ENCODE measurements at regions of chr6 and their contacts with region 1.

Region 1: DNA sequence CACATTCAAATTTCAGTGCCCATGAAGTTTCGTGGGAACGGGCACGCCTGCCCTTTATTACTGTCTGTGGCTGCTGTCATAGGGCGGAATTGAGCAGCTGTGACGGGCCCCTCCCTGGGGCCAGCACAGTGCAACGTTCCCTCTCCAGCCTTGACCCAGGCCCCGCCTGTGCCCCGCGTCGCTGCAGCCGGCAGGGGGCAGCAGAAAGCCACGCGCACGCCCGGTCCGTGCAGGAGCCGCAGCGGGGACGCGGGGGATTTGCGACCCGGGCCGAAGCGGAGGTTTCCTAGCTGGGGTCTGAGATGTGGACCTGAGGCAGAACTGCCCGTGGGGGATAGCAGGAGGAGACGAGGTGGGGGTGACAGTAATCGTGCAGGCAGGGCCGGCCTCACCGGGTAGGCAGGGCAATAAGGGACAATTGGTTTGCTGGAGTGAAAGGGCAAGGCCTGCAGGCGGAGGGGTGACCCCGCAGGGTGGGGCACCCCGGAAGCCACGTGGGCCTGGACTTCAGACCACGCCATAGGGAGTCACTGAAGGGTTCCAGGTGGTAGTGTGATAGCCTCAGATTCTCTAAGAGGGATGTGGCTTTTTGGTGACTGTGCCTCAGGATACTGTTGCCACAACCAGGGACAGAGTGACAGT is 54.4 kb downstream of the SYTL3 start:
- DNase-seq: peak; percentile 65
- H3K4me3 Mint-ChIP-seq: peak overlapping the region; percentile 75
- H3K27ac Mint-ChIP-seq: peak overlapping the region; percentile 12
- H3K4me1 Mint-ChIP-seq: peaks cover 32% of the 10 kb centered on the region
- H3K27me3 Mint-ChIP-seq: no peaks in the 10 kb centered on the region
- CTCF ChIP-seq: peak; percentile 99

Region 2: DNA sequence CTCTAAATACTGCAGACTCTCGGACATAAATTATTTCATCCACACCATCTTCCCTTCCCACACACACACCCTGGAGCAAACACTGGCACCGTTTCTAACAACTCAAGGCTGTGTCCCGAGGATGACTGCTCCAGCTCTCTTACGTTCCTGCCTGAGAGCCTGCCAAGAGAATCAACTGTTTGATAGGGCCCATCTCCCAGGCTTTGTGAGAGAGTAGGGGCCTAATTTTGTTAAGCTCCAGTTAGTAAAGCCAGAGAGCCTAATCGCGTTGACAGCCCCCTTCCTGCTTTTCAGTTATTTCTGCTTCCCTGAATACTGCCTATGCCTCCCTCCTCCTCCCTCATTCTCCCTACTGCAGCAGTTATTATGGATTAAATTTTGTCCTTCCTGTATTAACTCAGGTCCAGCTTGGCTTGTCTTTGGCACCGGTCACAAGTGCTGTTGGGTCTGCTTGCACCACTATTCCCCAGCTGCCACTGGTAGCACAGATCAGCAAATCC is 262.5 kb before region 1 on chr6:
- CTCF ChIA-PET with region 1: no interaction called
- POLR2A ChIA-PET with region 1: no interaction called
- intact Hi-C with region 1: no loop called
- DNase-seq: no peak
- H3K4me3 Mint-ChIP-seq: no peak overlapping the region
- H3K27ac Mint-ChIP-seq: peak overlapping the region; percentile 70
- H3K4me1 Mint-ChIP-seq: no peaks in the 10 kb centered on the region
- H3K27me3 Mint-ChIP-seq: no peaks in the 10 kb centered on the region
- CTCF ChIP-seq: no peak

Region 3: DNA sequence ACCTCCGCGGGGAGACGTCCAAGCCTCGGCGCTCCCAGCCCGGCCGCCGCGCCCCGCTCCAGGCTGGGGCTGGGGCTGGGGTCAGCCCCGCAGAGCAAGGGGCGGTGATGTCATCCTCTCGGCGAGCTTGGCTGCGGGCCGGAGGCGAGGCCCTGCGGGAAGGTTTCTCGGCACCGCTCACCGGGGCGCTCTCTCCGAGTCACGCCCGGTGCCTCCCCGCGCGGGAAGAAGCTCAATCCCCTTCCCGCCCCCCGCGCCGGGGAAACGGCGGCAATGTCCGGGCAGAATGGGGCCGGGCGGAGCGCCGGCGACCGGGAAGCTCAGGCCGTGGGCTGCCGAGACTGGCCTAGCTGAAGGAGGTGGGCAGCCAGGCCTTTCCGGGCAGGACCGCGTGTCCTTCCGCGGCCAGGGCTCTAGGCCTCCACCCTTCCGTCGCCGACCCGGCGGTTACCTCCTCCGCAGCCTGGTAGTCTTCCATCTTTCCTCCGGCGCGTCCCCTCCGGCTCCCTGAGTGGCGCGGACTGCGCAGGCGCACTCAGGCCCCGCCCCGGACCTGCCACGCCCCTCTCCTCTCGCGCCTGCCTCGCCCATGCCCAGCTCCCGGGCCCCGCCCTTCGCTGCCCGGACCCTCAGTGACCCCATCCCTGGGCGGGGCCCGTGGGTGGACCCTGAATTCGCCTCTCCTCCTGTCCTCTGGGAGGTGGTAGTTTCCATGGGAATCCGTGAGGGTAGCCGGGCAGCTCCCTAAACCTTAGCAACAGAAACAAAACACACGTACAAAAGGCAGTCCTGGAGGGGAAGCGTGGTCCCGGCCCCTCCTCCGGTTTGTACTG is 59.9 kb before region 1 on chr6 and contains the start of gene DYNLT1:
- CTCF ChIA-PET with region 1: interaction called, 4 read pairs
- POLR2A ChIA-PET with region 1: interaction called, 10 read pairs
- intact Hi-C with region 1: no loop called
- DNase-seq: peak; percentile 90
- H3K4me3 Mint-ChIP-seq: peak within 1 kb of the TSS; percentile 93
- H3K27ac Mint-ChIP-seq: peak within 1 kb of the TSS; percentile 94
- H3K4me1 Mint-ChIP-seq: peaks cover 55% of the 10 kb centered on the region
- H3K27me3 Mint-ChIP-seq: no peaks in the 10 kb centered on the region
- CTCF ChIP-seq: no peak
- total RNA-seq, gene DYNLT1: 122 and 156 TPM in 2 replicates

Region 4: DNA sequence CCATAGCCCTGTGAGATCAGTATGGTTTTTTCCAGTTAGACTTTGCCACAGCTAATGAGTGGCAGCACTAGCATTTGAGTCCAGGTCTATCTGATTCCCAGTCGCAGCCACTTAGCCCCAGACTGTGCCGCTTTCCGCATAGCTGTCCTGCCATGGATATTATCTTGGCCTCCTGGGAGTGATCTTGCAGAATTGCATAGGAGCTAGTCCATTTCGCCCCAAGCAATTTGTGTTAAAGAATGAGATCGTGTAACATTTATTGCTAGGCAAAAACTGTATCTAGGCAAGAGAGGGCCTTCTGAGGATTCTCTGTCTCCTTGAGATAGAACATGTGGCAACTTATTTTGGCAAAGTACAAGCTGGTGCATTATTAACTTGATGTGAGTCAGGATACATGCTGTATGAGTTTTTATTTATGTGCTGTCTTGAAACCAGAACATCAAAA is 40.7 kb after region 1 on chr6:
- CTCF ChIA-PET with region 1: interaction called, 14 read pairs
- POLR2A ChIA-PET with region 1: interaction called, 13 read pairs
- intact Hi-C with region 1: no loop called
- DNase-seq: no peak
- H3K4me3 Mint-ChIP-seq: no peak overlapping the region
- H3K27ac Mint-ChIP-seq: no peak overlapping the region
- H3K4me1 Mint-ChIP-seq: peaks cover 7% of the 10 kb centered on the region
- H3K27me3 Mint-ChIP-seq: no peaks in the 10 kb centered on the region
- CTCF ChIP-seq: no peak

Region 5: DNA sequence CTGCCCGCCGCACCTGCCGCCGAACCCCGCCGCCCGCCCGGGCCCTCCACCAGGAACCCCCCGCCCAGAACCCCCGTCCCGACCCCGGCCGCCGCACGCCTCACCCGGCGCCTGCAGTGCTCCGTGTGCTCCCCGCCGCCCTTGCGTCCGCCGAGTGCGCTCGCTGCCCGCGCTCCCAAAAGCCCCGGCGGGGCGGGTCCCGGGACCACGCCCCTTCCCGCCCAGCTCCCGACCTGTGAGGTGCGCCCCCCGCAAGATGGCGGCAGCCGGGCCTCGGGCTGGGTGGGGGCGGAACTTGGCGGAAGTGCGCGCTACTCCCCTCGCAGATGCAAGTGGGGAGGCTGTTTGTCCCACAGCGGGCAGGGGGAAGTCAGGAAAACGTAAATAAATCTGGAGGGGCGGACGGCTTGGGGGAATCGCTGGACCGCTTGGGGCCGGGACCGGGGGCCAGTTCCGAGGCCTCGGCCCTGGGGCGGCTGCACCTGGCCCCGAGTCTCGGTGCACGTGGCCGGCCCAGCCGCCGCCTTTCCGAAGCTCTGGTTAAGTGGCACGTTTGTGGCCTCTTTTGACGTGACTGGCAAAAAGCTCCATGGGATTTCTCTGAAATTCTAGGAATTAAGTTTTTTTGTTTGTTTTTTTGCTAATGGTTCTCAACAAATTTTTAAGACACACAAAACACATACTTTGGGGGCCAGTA is 115.1 kb after region 1 on chr6 and contains the start of gene EZR:
- CTCF ChIA-PET with region 1: interaction called, 5 read pairs
- POLR2A ChIA-PET with region 1: interaction called, 11 read pairs
- intact Hi-C with region 1: loop called (anchors 1 kb)
- DNase-seq: peak; percentile 76
- H3K4me3 Mint-ChIP-seq: peak within 1 kb of the TSS; percentile 97
- H3K27ac Mint-ChIP-seq: peak within 1 kb of the TSS; percentile 97
- H3K4me1 Mint-ChIP-seq: peaks cover 17% of the 10 kb centered on the region
- H3K27me3 Mint-ChIP-seq: no peaks in the 10 kb centered on the region
- CTCF ChIP-seq: no peak
- total RNA-seq, gene EZR: 243 and 296 TPM in 2 replicates

Region 6: DNA sequence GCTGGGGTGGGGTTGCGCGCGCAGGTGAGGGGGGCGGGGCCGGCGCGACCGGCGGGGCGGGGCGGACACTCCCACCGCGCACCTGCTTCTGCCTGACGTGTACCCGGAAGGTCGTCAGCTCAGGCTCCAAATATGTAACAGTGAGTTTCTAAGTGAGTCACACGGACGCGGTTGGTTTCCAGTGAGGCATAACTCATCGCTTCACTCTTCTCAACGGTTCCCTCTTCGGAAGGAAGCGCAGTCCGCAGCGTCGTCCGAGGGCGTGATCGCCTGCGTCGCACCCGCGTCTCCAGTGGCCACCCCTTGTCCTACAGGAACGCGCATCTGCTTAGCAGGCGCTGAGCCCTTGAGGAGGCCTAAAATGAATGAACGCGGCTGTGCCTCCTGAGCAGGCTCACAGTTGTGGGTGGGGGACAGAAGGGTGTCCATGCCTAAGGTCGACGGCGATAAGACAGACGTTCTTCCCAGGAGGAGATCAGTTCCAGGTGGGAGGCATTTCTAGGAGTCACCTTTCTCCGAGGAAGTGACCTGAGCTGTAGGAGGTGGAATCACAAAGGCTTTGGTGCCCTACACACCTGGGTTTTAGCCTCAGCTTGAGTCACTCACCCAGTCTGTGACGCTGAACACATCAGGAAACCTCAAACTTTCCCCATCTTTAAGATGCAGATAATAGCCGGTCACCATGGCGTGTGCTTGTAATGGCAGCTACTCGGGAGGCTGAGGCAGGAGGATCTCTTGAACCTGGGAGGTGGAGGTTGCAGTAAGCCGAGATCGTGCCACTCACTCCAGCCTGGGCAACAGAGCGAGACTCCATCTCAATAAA is 165.7 kb after region 1 on chr6:
- CTCF ChIA-PET with region 1: no interaction called
- POLR2A ChIA-PET with region 1: interaction called, 17 read pairs
- intact Hi-C with region 1: no loop called
- DNase-seq: peak; percentile 98
- H3K4me3 Mint-ChIP-seq: peak overlapping the region; percentile 83
- H3K27ac Mint-ChIP-seq: peak overlapping the region; percentile 100
- H3K4me1 Mint-ChIP-seq: peaks cover 14% of the 10 kb centered on the region
- H3K27me3 Mint-ChIP-seq: no peaks in the 10 kb centered on the region
- CTCF ChIP-seq: no peak

Region 7: DNA sequence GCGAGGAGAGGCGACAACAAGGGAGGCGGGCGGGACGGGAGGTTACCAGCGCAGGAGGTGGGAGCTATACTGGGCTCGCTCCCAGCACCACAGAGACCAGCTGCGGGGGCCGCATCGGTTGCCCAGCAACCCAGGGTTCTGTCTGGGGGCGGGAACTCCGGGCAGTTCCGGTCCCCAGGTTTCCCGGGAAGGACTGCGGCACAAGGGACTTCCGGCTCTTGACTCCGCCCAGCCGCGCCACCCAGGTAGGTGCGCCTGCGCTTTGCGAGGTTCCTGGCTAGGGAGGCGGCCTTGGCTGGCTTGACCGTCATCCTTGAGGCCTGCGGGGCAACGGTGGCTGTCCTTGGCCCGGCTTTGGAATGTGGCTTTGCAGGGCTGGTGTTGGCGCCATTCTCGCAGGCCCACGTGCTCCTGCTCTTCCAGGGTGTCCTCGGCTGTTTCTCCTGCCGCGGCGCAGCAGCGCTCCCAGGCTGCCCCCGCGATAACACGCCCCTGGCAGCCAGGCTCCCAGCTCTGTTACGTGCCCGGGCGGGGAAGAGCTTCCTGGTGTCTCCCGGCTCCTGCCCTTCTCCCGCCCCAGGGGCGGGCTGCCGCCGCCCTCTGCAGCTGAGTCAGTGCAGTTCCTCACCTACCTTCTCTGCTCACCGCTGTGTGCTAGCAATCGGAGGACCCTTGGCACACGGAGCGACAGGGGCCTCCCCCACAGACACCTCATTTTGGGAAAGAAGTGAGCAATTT is 295.5 kb after region 1 on chr6 and contains the start of gene RSPH3:
- CTCF ChIA-PET with region 1: interaction called, 13 read pairs
- POLR2A ChIA-PET with region 1: interaction called, 16 read pairs
- intact Hi-C with region 1: no loop called
- DNase-seq: peak; percentile 96
- H3K4me3 Mint-ChIP-seq: peak within 1 kb of the TSS; percentile 100
- H3K27ac Mint-ChIP-seq: peak within 1 kb of the TSS; percentile 84
- H3K4me1 Mint-ChIP-seq: peaks cover 21% of the 10 kb centered on the region
- H3K27me3 Mint-ChIP-seq: no peaks in the 10 kb centered on the region
- CTCF ChIP-seq: no peak
- total RNA-seq, gene RSPH3: 13.1 and 14.5 TPM in 2 replicates

Measured in MCF 10A (cell line).